Activated CD8-positive, alpha-beta T cell treated with anti-CD3 and anti-CD28 coated beads, Interleukin-2, amount 10 ng/mL, durations not matched to agents 7 days and 5 days (primary cell): ENCODE measurements at regions of chr9 and their contacts with region 1.

Region 1: DNA sequence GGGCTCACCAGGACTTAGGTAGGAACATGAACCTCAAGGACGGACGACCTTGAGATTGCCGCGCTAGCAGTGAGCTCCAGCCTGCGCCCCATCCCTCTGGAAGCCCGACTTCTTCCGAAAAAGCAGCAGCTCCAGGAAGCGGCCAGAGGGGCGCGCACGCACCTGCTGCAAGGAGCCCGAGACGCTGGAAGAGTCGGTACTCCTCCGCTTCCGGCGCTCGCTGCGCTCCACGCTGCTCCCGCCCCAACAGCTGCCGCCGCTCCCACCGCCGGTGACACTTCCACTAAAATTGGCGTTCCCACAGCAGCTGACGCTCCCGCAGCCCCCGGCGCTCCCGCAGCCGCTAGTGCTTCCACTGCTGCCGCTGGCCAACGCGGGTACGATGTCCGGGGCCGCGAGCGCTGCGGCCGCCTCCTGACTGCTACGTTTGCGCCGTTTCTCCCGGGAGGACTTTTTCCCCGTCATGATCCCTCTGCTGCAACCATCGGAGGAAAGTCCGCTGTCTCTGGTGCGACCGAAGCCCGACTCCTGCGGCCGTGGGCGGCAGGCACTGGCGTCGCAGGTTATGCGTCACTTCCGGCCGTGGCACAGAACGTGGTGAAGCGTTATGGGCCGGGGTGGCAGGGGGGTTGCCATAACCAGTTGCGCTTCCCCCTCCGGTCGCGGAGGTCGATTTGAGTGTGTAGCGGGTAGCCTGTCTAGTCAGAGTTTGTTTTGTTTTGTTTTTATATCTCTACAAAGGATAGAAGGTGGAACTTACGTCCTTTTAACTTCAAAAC is at the start of gene CAAP1:
- DNase-seq: peak; percentile 95
- ATAC-seq: peak; percentile 93
- H3K4me3 Mint-ChIP-seq: peak within 1 kb of the TSS; percentile 90
- H3K27ac Mint-ChIP-seq: peak within 1 kb of the TSS; percentile 98
- H3K4me1 Mint-ChIP-seq: peaks cover 35% of the 10 kb centered on the region
- H3K27me3 Mint-ChIP-seq: no peaks in the 10 kb centered on the region
- total RNA-seq, gene CAAP1: 20.8 to 20.9 TPM

Region 2: GRCh38 chr9:26919698-26920097 is 27.3 kb after region 1 on chr9:
- CTCF ChIA-PET with region 1: no interaction called
- POLR2A ChIA-PET with region 1: no interaction called
- DNase-seq: no peak
- ATAC-seq: no peak
- H3K4me3 Mint-ChIP-seq: no peak overlapping the region
- H3K27ac Mint-ChIP-seq: no peak overlapping the region
- H3K4me1 Mint-ChIP-seq: no peaks in the 10 kb centered on the region
- H3K27me3 Mint-ChIP-seq: no peaks in the 10 kb centered on the region

Region 3: DNA sequence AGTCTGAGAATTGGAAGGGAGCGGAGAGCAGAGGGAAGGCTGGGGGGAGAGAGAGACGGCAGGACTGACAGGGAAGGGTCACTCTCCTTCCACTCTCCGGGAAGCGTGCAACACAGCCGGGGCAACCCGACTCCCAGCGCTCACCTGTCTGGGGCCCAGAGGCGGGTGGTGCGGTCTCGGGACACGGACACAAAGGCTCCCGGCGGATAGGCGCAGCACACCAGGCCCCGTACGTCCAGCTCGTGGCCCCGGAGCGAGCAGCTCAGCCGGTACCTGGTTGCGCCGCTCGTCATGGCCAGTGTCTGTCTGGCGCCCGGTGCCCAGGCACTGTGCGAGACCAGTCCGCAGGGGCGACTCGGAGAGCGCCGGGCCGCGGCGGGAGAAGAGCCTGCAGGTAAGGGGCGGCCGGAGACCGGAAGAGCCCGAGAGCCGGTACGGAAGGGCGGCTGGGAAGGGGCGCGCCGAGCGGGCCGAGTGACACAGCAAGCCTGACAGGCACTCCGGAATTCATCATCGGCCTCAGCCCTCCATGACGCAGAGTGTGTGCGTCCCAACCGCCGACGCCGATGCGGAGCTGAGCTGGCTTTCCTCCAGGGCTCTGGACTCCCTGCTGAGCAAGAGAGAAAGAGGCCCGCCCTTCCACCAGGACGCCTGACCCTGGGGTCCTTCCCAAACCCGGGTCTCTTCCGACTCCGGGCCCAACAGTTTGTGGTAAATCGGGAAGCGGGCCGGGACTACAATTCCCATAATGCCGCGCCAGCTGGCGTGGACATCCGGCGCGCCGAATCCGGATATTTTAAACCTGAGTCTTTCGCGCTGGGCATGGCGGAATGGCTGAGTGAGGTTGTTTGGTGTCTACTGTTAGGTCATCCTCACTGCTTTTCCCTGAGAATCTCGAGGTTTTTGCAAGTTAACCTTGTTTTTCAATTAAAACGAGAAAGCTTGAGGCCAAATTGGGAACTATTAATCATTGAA is 54.6 kb after region 1 on chr9 and contains the start of gene PLAA:
- CTCF ChIA-PET with region 1: interaction called, 3 read pairs
- POLR2A ChIA-PET with region 1: interaction called, 13 read pairs
- DNase-seq: peak; percentile 90
- ATAC-seq: peak; percentile 96
- H3K4me3 Mint-ChIP-seq: peak within 1 kb of the TSS; percentile 96
- H3K27ac Mint-ChIP-seq: peak within 1 kb of the TSS; percentile 100
- H3K4me1 Mint-ChIP-seq: peaks cover 44% of the 10 kb centered on the region
- H3K27me3 Mint-ChIP-seq: no peaks in the 10 kb centered on the region
- total RNA-seq, gene PLAA: 30.5 to 35.2 TPM

Region 4: DNA sequence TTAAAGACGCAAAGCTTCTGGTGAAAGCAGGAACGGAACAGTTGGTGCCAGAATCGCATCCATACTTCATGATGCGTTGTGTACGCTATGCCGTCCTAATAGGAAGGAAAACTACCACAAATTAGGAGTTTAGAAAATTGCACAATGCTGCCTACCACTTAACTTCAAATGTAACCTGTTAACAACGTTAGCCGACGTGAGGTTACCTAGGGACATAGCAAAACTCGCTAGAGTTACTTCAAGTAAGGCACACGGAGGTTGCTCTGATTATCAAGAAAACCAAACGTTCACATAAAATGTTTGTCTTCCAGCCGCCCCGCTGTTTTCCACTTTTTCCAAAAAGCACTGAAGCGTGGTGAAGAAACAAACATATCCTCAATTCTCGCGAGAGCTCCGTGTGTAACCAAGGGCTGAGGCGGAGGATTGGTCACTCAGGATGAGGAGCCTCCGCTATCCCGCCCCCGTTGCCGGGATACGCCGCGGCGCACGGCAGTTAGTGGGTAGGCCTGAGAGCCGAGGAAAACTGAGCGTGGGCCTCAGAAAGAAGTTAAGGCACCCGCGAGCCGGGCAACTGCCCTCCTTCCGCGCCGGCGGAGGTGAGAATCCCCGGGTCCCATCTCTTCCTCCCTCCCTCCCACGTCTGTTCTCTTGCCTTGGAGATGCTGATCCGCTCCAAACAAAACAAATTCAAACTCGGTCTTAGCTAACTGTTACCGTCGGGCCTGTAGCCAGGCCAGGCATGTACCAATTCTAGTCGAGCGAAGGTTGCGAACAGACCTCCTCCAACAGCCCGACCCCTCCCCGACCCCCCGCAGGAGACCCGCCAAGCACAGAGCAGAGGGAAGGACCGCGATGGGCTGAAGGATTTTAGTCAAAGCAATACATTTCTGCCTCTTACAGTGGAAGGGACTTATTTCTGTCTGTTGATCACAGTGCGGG is 63.8 kb after region 1 on chr9 and contains the start of gene IFT74:
- CTCF ChIA-PET with region 1: interaction called, 21 read pairs
- POLR2A ChIA-PET with region 1: interaction called, 13 read pairs
- DNase-seq: peak; percentile 96
- ATAC-seq: peak; percentile 100
- H3K4me3 Mint-ChIP-seq: peak within 1 kb of the TSS; percentile 83
- H3K27ac Mint-ChIP-seq: peak within 1 kb of the TSS; percentile 84
- H3K4me1 Mint-ChIP-seq: peaks cover 33% of the 10 kb centered on the region
- H3K27me3 Mint-ChIP-seq: no peaks in the 10 kb centered on the region
- total RNA-seq, gene IFT74: 5.7 to 6.5 TPM